ENCODE measurements at regions of chr1 and their contacts with region 1.

Region 1: DNA sequence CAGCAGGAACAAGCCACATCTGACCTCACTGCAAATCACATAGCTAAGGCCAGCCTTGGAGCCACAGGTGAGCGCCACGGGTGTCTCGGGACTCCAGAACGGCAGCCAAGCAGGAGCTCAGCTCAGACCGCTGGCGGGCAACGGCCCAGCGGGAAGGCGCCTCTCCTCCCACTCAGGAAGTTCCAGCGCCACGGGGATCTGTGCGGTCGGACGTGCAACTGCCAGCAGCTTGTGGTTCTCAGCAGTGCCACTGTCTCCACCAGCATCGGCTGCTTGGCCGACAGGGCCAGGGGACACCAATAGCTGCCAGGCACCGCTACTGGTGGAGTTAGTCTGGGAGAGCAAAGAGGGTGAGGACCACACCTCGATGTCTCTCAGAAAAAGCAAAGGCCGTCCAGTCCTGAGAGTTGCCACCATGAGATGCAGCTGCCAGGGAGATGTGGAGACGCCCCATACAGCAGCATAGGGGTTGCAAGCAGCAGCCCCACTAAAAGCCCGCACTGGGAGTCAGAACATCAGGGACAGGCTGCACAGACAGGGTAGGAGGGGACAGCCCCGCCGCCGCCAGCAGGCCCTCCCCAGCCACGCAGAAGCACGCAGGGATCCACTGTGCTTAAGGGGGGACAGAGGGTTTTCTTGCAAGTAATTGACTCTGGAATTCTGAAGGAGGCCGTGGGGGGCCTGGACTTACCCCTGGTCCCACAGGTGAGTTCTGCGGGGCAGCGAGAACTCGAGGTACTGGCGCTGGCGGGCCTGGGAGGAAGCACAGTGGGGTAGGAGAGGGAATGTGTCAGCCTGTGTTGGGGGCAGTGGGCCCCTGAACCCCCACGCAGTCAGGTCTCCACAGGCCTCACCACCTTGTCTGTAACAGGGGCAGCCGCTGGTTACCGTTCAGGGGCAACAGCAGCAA is 83.5 kb downstream of the NPHP4 start:
- DNase-seq: peak; percentile 93
- H3K4me3 ChIP-seq: no peak overlapping the region
- H3K27ac ChIP-seq: peak overlapping the region; percentile 88
- H3K4me1 ChIP-seq: peaks cover 55% of the 10 kb centered on the region
- H3K27me3 ChIP-seq: no peaks in the 10 kb centered on the region
- CTCF ChIP-seq: peak; percentile 46

Region 2: GRCh38 chr1:6365047-6365446 is 456.3 kb after region 1 on chr1:
- CTCF ChIA-PET with region 1: interaction called, 12 read pairs
- POLR2A ChIA-PET with region 1: no interaction called
- intact Hi-C with region 1: no loop called
- DNase-seq: no peak
- H3K4me3 ChIP-seq: no peak overlapping the region
- H3K27ac ChIP-seq: no peak overlapping the region
- H3K4me1 ChIP-seq: peaks cover under 1% of the 10 kb centered on the region
- H3K27me3 ChIP-seq: no peaks in the 10 kb centered on the region
- CTCF ChIP-seq: no peak

Measured in A673 (cell line).